ENCODE measurements at regions of chr12 and their contacts with region 1.

Region 1: DNA sequence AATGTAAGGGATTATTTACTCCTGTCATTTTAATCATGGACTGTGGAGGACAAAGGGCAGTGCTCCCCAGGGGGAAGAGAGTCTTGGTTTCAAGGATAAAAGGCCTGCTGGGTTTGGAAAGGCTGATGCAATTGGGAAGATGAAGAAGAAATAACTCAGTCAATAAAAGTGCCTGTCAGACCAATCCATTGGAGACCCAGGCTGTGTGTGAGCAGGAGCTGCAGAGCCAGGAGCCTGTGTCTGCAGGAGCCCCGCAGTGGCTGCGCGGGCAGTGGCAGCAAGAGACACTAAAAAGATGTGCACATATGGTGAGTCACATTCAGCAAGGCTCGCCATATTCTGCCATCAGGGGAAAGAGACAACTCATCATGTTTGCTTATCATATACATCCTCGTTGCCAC is 90.4 kb downstream of the CRACR2A start:
- DNase-seq: no peak
- H3K4me3 ChIP-seq: no peak overlapping the region
- H3K27ac ChIP-seq: no peak overlapping the region
- H3K4me1 ChIP-seq: no peaks in the 10 kb centered on the region
- H3K27me3 ChIP-seq: no peaks in the 10 kb centered on the region
- CTCF ChIP-seq: no peak
- POLR2A ChIP-seq: no peak

Region 2: DNA sequence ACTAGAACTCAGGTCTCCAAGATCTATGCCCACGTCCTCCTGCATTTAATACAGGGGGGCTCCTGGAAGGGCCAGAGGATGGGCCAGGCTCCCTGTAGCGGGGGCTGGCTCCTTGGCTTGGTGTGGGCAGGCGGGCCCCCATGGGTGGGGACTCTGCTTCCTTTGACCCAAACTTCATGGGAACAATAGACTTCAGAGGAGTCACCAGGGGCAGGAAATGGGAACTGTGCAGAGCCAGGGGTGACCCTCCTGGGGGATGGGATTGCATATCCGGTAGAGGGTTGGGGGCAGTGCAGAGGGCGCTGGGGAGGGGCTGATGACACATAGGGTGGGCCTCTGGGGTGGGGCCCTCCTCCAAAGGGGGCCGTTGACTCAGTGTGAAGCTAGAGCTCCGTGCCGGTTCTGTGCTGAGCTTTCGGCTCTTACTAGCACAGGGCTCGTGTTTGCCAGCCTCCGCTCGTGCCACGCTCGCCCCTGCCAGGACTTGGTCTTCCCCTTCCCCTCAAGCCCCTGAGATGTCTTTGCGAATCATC is 698.7 kb before region 1 on chr12:
- intact Hi-C with region 1: no loop called
- DNase-seq: no peak
- H3K4me3 ChIP-seq: peak overlapping the region in 1 of 3 donors; percentile 13
- H3K27ac ChIP-seq: peak overlapping the region in 1 of 2 donors; percentile 63
- H3K4me1 ChIP-seq: no peaks in the 10 kb centered on the region
- H3K27me3 ChIP-seq: no peaks in the 10 kb centered on the region
- CTCF ChIP-seq: no peak
- POLR2A ChIP-seq: no peak

Region 3: DNA sequence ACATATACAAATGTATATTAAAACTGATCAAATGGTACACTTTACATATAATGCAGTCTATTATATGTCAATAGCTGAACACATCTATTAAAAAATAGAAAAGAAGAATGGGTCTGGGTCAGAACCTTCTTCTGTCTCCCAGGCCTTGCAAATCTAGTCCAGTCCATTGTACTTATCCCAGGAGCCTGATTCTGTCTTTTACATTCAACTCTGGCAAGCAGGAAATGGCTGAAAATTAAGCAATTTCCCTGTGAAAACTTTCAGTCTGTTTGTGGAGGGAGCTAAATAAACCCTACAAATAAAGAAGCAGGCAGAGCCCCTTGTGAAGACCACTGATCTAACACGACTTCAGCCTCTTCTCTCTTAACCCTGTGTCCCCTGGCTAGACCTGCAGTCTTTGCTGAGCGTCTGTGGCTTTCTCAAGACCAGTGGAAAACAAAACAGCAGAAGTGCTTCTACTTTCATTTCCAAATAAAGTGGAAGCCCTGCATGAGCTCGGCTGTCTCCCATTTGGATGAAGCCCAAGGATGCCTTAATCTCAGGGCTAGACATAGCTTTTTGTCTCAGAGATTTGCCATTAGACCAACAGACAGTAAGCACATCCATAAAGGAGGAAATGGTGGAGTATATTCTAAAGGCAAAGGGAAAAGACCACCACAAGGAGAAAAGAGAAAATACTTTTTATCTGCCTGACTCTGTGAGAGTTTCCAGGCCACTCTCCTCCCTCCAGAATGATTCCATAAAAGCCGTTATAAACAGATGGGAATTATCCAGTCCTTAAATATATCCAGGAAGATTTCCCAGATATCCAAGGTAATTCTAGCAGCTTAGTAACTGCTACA is 42.2 kb after region 1 on chr12:
- intact Hi-C with region 1: loop called (anchors 1 kb)
- DNase-seq: no peak
- H3K4me3 ChIP-seq: peak overlapping the region in 2 of 3 donors; percentile 8 to 26
- H3K27ac ChIP-seq: peak overlapping the region; percentile 66 to 76
- H3K4me1 ChIP-seq: no peaks in the 10 kb centered on the region
- H3K27me3 ChIP-seq: no peaks in the 10 kb centered on the region
- CTCF ChIP-seq: no peak
- POLR2A ChIP-seq: no peak